ENCODE measurements at regions of chr10 and their contacts with region 1.

Region 1: GRCh38 chr10:63720072-63720537 is 198.9 kb downstream of the REEP3 start:
- DNase-seq: peak in 29 of 35 experiments; percentile 7 to 77 (median 29)
- ATAC-seq: peak; percentile 66 to 85 (median 66)
- H3K4me3 ChIP-seq: no peak overlapping the region
- H3K4me3 Mint-ChIP-seq: no peak overlapping the region
- H3K27ac ChIP-seq: no peak overlapping the region
- H3K27ac Mint-ChIP-seq: no peak overlapping the region
- H3K4me1 ChIP-seq: peaks cover 4 to 9% of the 10 kb centered on the region in 2 experiments
- H3K4me1 Mint-ChIP-seq: peaks cover 7 to 11% (median 8%) of the 10 kb centered on the region in 3 donors
- H3K27me3 ChIP-seq: peaks cover 0 to 15% of the 10 kb centered on the region in 2 experiments
- H3K27me3 Mint-ChIP-seq: peaks cover 3 to 8% of the 10 kb centered on the region in 2 donors

Region 2: DNA sequence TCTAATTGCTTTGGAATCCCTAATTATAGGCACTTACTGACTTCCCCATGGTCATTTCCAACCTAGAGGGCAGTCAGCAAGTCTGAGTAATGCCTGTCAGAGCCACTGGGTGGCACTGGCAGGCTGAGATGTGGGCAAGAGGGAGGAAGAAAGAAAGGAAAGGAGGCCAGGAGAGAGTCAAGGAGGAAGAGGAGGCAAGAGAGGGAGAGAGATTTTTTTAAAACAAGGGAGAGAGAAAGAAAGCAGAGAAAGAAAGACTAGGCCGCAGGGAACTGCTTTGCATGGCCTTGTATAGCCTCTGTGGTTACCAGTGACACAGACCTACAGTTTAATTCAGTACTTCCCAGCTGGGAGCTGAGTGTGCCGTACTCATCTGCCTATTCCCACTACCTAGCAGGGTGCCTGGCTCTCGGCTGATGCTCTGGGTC is 1126.0 kb before region 1 on chr10:
- CTCF ChIA-PET with region 1: interaction called, 6 to 12 read pairs
- POLR2A ChIA-PET with region 1: no interaction called
- DNase-seq: peak in 28 of 35 experiments; percentile 9 to 71 (median 33)
- ATAC-seq: peak; percentile 72 to 76 (median 74)
- H3K4me3 ChIP-seq: no peak overlapping the region
- H3K4me3 Mint-ChIP-seq: no peak overlapping the region
- H3K27ac ChIP-seq: no peak overlapping the region
- H3K27ac Mint-ChIP-seq: no peak overlapping the region
- H3K4me1 ChIP-seq: no peaks in the 10 kb centered on the region
- H3K4me1 Mint-ChIP-seq: peaks cover 0 to 6% (median 2%) of the 10 kb centered on the region in 3 donors
- H3K27me3 ChIP-seq: no peaks in the 10 kb centered on the region
- H3K27me3 Mint-ChIP-seq: peaks cover 0 to 11% of the 10 kb centered on the region in 2 donors

Region 3: DNA sequence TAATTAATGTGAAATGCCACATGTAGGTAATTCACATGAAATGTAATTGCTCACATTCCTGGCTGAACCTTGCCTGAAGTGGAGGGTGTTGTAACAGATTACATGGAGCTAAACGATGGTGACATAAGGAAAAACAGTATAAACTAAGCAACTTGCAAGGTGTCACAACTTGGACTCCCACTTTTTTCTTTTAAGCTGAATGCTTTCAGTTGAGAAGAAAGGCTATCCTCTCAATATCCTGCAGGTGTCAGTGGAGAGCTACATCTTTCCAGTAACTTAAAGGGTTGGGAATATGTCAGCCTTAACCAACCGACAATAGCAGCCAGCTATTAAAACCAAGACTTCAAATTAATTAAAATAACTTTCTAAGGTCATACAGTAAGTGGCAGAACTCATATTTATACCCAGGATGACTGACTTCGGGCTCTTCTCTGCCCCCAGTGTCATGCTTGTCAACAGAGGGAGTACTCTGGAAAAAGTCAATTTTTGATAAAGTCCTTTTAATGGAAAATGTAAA is 553.3 kb before region 1 on chr10:
- CTCF ChIA-PET with region 1: interaction called, 123 to 290 read pairs
- POLR2A ChIA-PET with region 1: interaction called in 1 of 2 experiments, 10 read pairs
- DNase-seq: peak in 13 of 35 experiments; percentile 4 to 80 (median 19)
- ATAC-seq: peak; percentile 69 to 74 (median 70)
- H3K4me3 ChIP-seq: no peak overlapping the region
- H3K4me3 Mint-ChIP-seq: no peak overlapping the region
- H3K27ac ChIP-seq: no peak overlapping the region
- H3K27ac Mint-ChIP-seq: no peak overlapping the region
- H3K4me1 ChIP-seq: no peaks in the 10 kb centered on the region
- H3K4me1 Mint-ChIP-seq: peaks cover 2 to 3% (median 3%) of the 10 kb centered on the region in 3 donors
- H3K27me3 ChIP-seq: no peaks in the 10 kb centered on the region
- H3K27me3 Mint-ChIP-seq: no peaks in the 10 kb centered on the region

Region 4: DNA sequence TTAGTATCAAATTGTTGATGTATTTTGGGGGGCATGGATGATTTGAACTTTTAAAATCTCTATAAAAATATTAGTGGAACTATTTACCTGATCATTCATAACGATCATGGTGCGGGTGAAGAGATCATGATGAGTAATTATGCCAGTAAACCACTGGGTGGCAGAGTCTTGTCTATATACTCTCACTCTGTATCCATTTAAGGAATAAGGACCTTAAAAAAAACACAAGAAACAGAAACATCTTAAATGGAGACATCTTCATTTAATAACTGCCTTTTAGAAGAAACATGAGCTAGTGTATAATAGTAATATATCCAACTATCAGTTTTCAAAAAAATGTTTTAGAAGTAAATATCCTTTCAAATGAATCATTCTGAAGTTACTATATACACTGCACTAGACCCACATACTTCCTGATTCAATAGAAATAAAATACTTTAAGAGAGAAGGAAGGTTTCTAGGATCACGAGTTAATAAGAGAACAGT is 502.9 kb before region 1 on chr10:
- CTCF ChIA-PET with region 1: interaction called, 4 to 30 read pairs
- POLR2A ChIA-PET with region 1: interaction called in 1 of 2 experiments, 6 read pairs
- DNase-seq: peak in 8 of 35 experiments; percentile 6 to 73 (median 24)
- ATAC-seq: peak; percentile 77 to 85 (median 80)
- H3K4me3 ChIP-seq: no peak overlapping the region
- H3K4me3 Mint-ChIP-seq: no peak overlapping the region
- H3K27ac ChIP-seq: no peak overlapping the region
- H3K27ac Mint-ChIP-seq: peak overlapping the region; percentile 55 to 73
- H3K4me1 ChIP-seq: peaks cover 6 to 19% of the 10 kb centered on the region in 2 experiments
- H3K4me1 Mint-ChIP-seq: peaks cover 55 to 64% (median 62%) of the 10 kb centered on the region in 3 donors
- H3K27me3 ChIP-seq: no peaks in the 10 kb centered on the region
- H3K27me3 Mint-ChIP-seq: no peaks in the 10 kb centered on the region

Region 5: DNA sequence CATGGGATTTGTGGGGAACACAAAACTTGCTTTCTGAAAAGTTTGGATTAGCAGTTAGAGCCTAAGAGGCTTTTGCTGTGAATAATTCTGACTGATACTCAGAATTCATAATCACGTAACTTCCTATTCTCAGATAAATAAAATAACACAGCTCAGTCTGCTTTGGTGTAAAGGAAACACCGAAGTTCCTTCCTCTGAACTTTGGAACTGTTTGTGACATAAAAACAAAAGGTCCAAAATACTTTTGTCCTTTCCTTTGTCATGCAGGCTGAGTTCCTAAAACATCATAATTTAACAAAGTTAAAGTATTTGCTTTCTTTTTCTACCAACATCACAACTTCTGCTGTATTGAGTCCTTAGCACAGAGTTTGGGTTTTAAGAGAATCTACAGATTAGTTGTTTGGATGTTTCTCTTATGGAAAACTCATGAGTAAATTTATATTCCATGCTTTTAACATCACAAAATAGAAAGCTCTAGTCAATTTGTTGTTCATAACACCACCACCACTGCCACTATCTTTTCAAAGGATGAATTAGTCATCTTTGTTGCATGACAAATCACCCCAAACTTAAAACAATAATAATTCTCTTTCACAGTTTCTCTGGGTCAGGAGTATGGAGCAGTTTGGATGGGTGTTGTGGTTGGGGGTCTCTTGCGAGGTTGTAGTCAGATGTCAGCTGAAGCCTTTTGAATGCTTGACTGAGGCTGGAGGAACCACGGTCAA is 75.5 kb before region 1 on chr10:
- CTCF ChIA-PET with region 1: no interaction called
- POLR2A ChIA-PET with region 1: no interaction called
- DNase-seq: no peak
- ATAC-seq: no peak
- H3K4me3 ChIP-seq: no peak overlapping the region
- H3K4me3 Mint-ChIP-seq: no peak overlapping the region
- H3K27ac ChIP-seq: no peak overlapping the region
- H3K27ac Mint-ChIP-seq: no peak overlapping the region
- H3K4me1 ChIP-seq: no peaks in the 10 kb centered on the region
- H3K4me1 Mint-ChIP-seq: peaks cover 0 to 7% (median 6%) of the 10 kb centered on the region in 3 donors
- H3K27me3 ChIP-seq: no peaks in the 10 kb centered on the region
- H3K27me3 Mint-ChIP-seq: no peaks in the 10 kb centered on the region